Endothelial cell of umbilical vein (primary cell): ENCODE measurements at regions of chr1 and their contacts with region 1.

Region 1: DNA sequence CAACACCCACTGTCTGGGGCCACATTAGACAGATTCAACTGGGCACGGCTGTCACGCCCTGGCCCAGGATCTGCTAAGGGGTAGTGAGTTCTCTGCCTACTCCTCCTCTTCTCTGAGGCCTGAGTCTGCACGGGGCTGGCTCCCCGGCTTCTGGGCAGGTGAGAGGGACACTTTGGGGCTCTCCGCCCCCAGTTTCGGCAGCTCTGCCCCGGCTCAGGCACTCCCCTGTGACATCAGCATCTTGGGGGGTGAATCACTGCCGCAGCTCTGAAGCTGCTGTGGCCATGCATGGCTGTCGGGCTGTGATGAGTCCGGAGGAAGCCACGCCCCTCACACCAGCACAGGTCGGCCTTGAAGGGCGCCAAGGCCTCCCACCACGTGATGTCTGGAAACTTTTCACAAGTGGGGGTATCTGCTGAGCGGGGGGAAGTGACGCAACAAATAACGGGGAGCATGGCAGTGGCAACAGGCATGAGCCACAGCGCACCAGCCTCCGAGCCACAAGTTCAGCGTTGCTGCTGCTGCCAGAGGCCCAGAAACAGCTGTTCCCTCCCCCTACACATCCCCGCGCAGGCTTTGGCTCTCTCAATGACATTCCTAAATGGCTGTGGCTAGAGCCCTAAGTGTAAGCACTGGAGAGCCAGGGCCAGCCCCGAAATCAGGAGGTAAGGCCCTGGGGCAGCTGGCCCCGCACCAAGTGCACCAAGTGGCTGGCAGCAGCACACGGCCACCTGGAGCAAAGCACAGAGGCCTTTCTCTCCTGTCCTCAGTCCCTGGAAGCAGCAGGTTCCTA is 26.3 kb downstream of the ZBTB17 start:
- DNase-seq: peak; percentile 92
- H3K4me3 ChIP-seq: no peak overlapping the region
- H3K27ac ChIP-seq: peak overlapping the region; percentile 75
- H3K4me1 ChIP-seq: peaks cover 60% of the 10 kb centered on the region
- H3K27me3 ChIP-seq: no peaks in the 10 kb centered on the region
- CTCF ChIP-seq: no peak
- POLR2A ChIP-seq: no peak

Region 2: GRCh38 chr1:15797614-15798390 is 151.8 kb before region 1 on chr1:
- CTCF ChIA-PET with region 1: interaction called, 5 read pairs
- POLR2A ChIA-PET with region 1: no interaction called
- dilution Hi-C with region 1: no loop called
- intact Hi-C with region 1: loop called (anchors 1 kb)
- DNase-seq: peak; percentile 30
- H3K4me3 ChIP-seq: no peak overlapping the region
- H3K27ac ChIP-seq: peak overlapping the region; percentile 88
- H3K4me1 ChIP-seq: peaks cover 56% of the 10 kb centered on the region
- H3K27me3 ChIP-seq: no peaks in the 10 kb centered on the region
- CTCF ChIP-seq: no peak
- POLR2A ChIP-seq: no peak

Region 3: GRCh38 chr1:15975805-15976680 is 26.4 kb after region 1 on chr1 and contains the start of gene ZBTB17:
- CTCF ChIA-PET with region 1: no interaction called
- POLR2A ChIA-PET with region 1: interaction called, 3 read pairs
- dilution Hi-C with region 1: no loop called
- intact Hi-C with region 1: loop called (anchors 1 kb)
- DNase-seq: peak; percentile 92
- H3K4me3 ChIP-seq: peak within 1 kb of the TSS; percentile 61 to 92 (median 88)
- H3K27ac ChIP-seq: peak within 1 kb of the TSS; percentile 57
- H3K4me1 ChIP-seq: peaks cover 7% of the 10 kb centered on the region
- H3K27me3 ChIP-seq: no peaks in the 10 kb centered on the region
- CTCF ChIP-seq: no peak
- POLR2A ChIP-seq: peak; percentile 54
- total RNA-seq, gene ZBTB17: 38.5 and 43.9 TPM in 2 replicates

Region 4: GRCh38 chr1:15994590-15995351 is 45.1 kb after region 1 on chr1:
- CTCF ChIA-PET with region 1: interaction called, 4 read pairs
- POLR2A ChIA-PET with region 1: no interaction called
- dilution Hi-C with region 1: no loop called
- intact Hi-C with region 1: loop called (anchors 2 kb)
- DNase-seq: peak; percentile 71
- H3K4me3 ChIP-seq: no peak overlapping the region
- H3K27ac ChIP-seq: no peak overlapping the region
- H3K4me1 ChIP-seq: no peaks in the 10 kb centered on the region
- H3K27me3 ChIP-seq: peaks cover 0 to 2% of the 10 kb centered on the region in 2 experiments
- CTCF ChIP-seq: peak; percentile 88 to 96
- POLR2A ChIP-seq: no peak

Region 5: DNA sequence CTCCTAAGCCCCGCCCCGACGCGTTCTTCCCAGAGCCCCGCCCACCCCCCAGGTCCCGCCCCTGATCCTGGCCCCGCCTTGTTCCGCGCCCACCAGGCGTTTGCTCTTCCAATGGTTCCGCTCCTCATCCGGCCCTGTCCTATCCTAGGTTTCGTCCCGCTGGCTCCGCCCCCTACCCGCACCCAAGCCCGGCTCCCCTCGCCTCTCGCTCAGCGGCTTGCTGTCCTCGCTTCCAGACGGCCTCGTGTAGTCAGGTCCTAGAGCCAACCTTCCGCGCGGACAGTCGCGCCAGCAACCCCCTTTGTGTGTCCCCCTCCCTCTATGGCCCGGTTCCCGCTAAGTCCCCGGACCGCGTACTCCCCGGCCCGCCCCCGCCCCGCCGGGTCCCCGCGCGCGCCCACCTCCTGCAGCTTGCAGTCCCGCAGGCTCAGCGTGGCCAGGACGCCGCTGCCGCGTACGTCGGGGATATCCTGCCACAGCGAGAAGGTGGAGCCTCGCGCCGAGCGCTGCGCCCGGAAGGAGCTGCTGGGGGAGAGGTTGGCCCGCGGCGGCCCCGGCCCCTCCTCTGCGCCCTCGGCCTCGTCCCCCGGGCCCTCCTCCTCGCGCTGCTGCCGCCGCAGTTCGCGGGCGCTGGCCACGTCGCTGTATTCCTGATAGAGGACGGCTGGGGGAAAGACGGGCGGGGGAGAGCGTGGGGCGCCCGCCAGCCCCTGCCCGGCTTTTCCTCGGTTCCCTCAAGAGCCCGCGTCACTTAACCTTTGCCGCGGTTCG is 257.1 kb after region 1 on chr1:
- CTCF ChIA-PET with region 1: no interaction called
- POLR2A ChIA-PET with region 1: no interaction called
- dilution Hi-C with region 1: no loop called
- intact Hi-C with region 1: no loop called
- DNase-seq: peak; percentile 98
- H3K4me3 ChIP-seq: peak overlapping the region; percentile 41 to 57 (median 50)
- H3K27ac ChIP-seq: peak overlapping the region; percentile 49
- H3K4me1 ChIP-seq: peaks cover 9% of the 10 kb centered on the region
- H3K27me3 ChIP-seq: no peaks in the 10 kb centered on the region
- CTCF ChIP-seq: no peak
- POLR2A ChIP-seq: peak; percentile 76